CD4-positive, alpha-beta memory T cell (primary cell): ENCODE measurements at regions of chr1 and their contacts with region 1.

Region 1: DNA sequence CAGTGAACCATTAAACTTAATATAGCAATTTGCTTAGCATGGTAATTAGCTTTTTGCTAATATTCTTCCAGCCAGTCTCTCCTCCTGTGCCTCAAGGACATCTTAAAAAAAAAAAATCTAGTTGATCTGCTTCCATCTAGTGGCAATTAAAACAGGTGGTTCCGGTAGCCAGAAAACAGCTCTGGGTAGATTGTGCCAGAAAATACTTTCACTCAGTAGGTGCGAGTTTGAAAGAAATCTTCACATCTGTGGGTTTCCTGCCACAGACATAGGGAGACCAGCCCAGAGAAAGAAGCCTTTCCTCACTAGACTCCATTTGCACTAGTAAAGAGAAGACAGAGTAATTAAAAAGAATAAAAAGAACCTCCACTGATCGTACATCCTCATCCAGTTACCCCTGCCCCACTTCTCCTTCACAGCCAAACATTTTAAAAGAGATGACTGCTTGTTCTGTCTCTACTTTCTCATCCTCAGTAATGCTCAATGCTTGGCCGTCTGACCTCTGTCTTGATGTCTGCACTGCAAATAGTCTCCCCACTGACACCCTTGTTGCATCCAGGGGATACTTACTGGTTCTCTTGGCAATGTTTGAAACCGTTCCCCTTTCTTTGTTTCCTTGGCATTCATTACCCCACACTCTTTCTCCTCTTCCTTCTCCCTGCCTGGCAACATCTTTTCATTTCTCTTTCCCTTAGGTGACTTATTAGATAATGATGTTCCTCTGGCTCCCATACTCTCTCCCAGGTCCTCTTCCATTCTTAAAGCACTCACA is 16.9 kb downstream of the SELL start:
- DNase-seq: peak; percentile 76 to 84 (median 79)
- H3K4me3 ChIP-seq: no peak overlapping the region
- H3K4me3 Mint-ChIP-seq: peak overlapping the region; percentile 55 to 83 (median 68)
- H3K27ac ChIP-seq: peak overlapping the region; percentile 43
- H3K27ac Mint-ChIP-seq: peak overlapping the region in 6 of 7 donors; percentile 90 to 95 (median 92)
- H3K4me1 ChIP-seq: peaks cover 99% of the 10 kb centered on the region
- H3K4me1 Mint-ChIP-seq: peaks cover 81 to 97% (median 88%) of the 10 kb centered on the region in 4 donors
- H3K27me3 ChIP-seq: no peaks in the 10 kb centered on the region
- H3K27me3 Mint-ChIP-seq: no peaks in the 10 kb centered on the region

Region 2: GRCh38 chr1:169060906-169061639 is 633.4 kb before region 1 on chr1:
- CTCF ChIA-PET with region 1: no interaction called
- POLR2A ChIA-PET with region 1: no interaction called
- intact Hi-C with region 1: no loop called
- DNase-seq: no peak
- H3K4me3 ChIP-seq: no peak overlapping the region
- H3K4me3 Mint-ChIP-seq: no peak overlapping the region
- H3K27ac ChIP-seq: no peak overlapping the region
- H3K27ac Mint-ChIP-seq: no peak overlapping the region
- H3K4me1 ChIP-seq: no peaks in the 10 kb centered on the region
- H3K4me1 Mint-ChIP-seq: peaks cover 0 to 4% (median 1%) of the 10 kb centered on the region in 4 donors
- H3K27me3 ChIP-seq: no peaks in the 10 kb centered on the region
- H3K27me3 Mint-ChIP-seq: peaks cover 0 to 2% of the 10 kb centered on the region in 2 donors

Region 3: GRCh38 chr1:169367486-169368405 is 326.7 kb before region 1 on chr1 and contains the starts of genes BLZF1 and NME7:
- CTCF ChIA-PET with region 1: no interaction called
- POLR2A ChIA-PET with region 1: no interaction called
- intact Hi-C with region 1: loop called (anchors 10 kb)
- DNase-seq: peak; percentile 95 to 99 (median 98)
- H3K4me3 ChIP-seq: peak within 1 kb of the TSS; percentile 96
- H3K4me3 Mint-ChIP-seq: peak within 1 kb of the TSS in 3 of 8 donors; percentile 16 to 51 (median 24)
- H3K27ac ChIP-seq: peak within 1 kb of the TSS; percentile 71
- H3K27ac Mint-ChIP-seq: peak within 1 kb of the TSS in 3 of 7 donors; percentile 25 to 54 (median 33)
- H3K4me1 ChIP-seq: peaks cover 44% of the 10 kb centered on the region
- H3K4me1 Mint-ChIP-seq: peaks cover 22 to 31% (median 23%) of the 10 kb centered on the region in 4 donors
- H3K27me3 ChIP-seq: no peaks in the 10 kb centered on the region
- H3K27me3 Mint-ChIP-seq: no peaks in the 10 kb centered on the region
- total RNA-seq, gene BLZF1: 20.0 to 23.8 TPM
- total RNA-seq, gene NME7: 12.0 to 14.3 TPM

Region 4: DNA sequence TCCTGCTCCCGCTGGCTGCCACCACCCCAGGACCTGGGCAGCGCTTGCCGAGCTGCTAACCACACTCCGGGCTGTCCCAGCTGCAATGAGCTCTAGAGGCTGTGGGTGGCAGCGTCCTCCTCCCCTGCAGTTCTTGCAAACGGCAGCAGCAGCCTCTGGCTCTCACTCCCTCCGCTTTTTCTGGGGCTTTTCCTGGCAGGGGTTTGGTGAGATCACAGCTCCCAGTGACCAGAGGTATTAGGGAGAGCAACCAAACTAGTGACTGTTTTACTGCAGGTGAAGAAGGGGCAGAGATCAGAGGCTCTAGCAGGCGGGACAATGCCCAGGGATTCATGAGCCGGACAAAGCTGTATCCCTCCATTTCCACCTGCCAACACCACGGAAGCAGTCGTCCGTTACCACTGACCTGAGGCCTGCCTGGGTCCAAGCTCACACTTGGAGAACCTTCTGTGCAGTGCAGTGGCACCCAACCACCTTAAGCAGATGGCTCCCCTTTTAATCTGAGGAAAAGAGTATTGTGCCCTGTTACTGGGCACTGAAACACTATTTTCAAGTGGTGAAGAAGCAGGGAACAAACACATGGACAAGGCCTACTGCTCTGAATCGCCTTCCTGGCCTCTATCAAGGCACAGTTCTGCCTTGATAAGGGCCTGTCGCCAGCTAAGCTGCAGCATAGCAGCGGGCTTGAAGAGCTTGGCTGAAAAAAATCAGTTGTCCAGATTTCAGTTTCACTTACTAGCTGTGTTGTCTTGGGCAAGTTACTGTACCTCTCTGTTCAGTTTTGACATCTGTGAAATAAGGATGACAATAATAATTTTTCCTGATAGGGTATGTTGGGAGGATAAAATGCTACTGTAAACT is 107.9 kb before region 1 on chr1 and contains the start of gene F5:
- CTCF ChIA-PET with region 1: interaction called, 34 read pairs
- POLR2A ChIA-PET with region 1: interaction called, 30 read pairs
- intact Hi-C with region 1: loop called (anchors 1 kb)
- DNase-seq: peak; percentile 67 to 78 (median 72)
- H3K4me3 ChIP-seq: peak within 1 kb of the TSS; percentile 47 to 62
- H3K4me3 Mint-ChIP-seq: peak within 1 kb of the TSS; percentile 86 to 94 (median 89)
- H3K27ac ChIP-seq: peak within 1 kb of the TSS; percentile 36
- H3K27ac Mint-ChIP-seq: peak within 1 kb of the TSS; percentile 58 to 95 (median 74)
- H3K4me1 ChIP-seq: peaks cover 52% of the 10 kb centered on the region
- H3K4me1 Mint-ChIP-seq: peaks cover 15 to 51% (median 37%) of the 10 kb centered on the region in 4 donors
- H3K27me3 ChIP-seq: no peaks in the 10 kb centered on the region
- H3K27me3 Mint-ChIP-seq: peaks cover 2 to 11% of the 10 kb centered on the region in 2 donors
- total RNA-seq, gene F5: 4.9 to 6.1 TPM

Region 5: GRCh38 chr1:169624912-169625311 is 69.6 kb before region 1 on chr1:
- CTCF ChIA-PET with region 1: no interaction called
- POLR2A ChIA-PET with region 1: interaction called, 10 read pairs
- intact Hi-C with region 1: no loop called
- DNase-seq: no peak
- H3K4me3 ChIP-seq: no peak overlapping the region
- H3K4me3 Mint-ChIP-seq: peak overlapping the region in 1 of 8 donors; percentile 6
- H3K27ac ChIP-seq: no peak overlapping the region
- H3K27ac Mint-ChIP-seq: peak overlapping the region in 2 of 7 donors; percentile 11 to 38
- H3K4me1 ChIP-seq: peaks cover 40% of the 10 kb centered on the region
- H3K4me1 Mint-ChIP-seq: peaks cover 33 to 58% (median 51%) of the 10 kb centered on the region in 4 donors
- H3K27me3 ChIP-seq: no peaks in the 10 kb centered on the region
- H3K27me3 Mint-ChIP-seq: no peaks in the 10 kb centered on the region

Region 6: DNA sequence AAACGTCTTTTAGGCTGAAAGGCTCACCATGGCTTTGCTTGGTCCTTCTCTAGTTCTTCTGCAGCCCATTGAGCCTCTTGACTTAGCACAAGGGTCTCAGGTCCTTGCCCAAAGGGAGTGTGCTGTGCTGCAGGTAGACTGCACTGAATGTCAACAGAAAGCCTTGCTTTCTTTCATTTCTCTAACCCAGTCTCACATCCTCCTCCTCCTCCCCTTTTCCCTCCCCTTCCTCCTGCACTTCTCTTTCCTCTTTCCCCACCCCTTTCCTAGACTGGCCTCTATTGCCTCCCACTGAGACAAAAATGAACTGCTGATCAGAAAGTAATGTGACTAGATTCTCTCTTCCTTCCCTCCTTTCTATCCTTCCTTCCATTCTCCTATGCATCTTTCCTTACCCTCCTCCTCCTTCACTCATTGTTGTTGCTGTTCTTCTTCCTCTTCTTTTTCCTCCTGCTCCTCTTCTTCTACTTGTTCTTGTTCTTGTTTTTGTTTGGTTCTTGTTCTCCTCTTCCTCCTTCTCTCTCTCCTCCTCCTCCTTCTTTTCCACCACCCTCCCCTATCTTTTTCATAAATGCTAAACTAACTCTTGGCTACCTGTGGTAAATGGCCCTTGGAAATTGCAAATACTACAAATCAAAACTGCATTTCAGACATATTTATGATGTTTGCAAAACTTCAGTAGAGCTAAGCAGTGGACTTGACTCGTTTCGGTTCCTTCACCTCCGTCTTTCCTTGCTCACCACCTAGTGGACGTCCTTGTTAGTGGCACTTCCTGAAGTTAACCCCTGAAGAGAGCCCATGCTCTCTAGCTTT is 17.2 kb after region 1 on chr1 and contains the start of gene SELL:
- CTCF ChIA-PET with region 1: interaction called, 85 read pairs
- POLR2A ChIA-PET with region 1: interaction called, 248 read pairs
- intact Hi-C with region 1: loop called (anchors 1 kb)
- DNase-seq: peak; percentile 75 to 83 (median 78)
- H3K4me3 ChIP-seq: peak within 1 kb of the TSS; percentile 55 to 61
- H3K4me3 Mint-ChIP-seq: peak within 1 kb of the TSS; percentile 87 to 96 (median 92)
- H3K27ac ChIP-seq: peak within 1 kb of the TSS; percentile 48
- H3K27ac Mint-ChIP-seq: peak within 1 kb of the TSS; percentile 70 to 95 (median 86)
- H3K4me1 ChIP-seq: peaks cover 18% of the 10 kb centered on the region
- H3K4me1 Mint-ChIP-seq: peaks cover 16 to 28% (median 24%) of the 10 kb centered on the region in 4 donors
- H3K27me3 ChIP-seq: no peaks in the 10 kb centered on the region
- H3K27me3 Mint-ChIP-seq: peaks cover 3 to 4% of the 10 kb centered on the region in 2 donors
- total RNA-seq, gene SELL: 378 to 396 TPM

Region 7: GRCh38 chr1:170114906-170115305 is 420.4 kb after region 1 on chr1:
- CTCF ChIA-PET with region 1: no interaction called
- POLR2A ChIA-PET with region 1: no interaction called
- intact Hi-C with region 1: no loop called
- DNase-seq: no peak
- H3K4me3 ChIP-seq: no peak overlapping the region
- H3K4me3 Mint-ChIP-seq: no peak overlapping the region
- H3K27ac ChIP-seq: no peak overlapping the region
- H3K27ac Mint-ChIP-seq: no peak overlapping the region
- H3K4me1 ChIP-seq: no peaks in the 10 kb centered on the region
- H3K4me1 Mint-ChIP-seq: no peaks in the 10 kb centered on the region
- H3K27me3 ChIP-seq: no peaks in the 10 kb centered on the region
- H3K27me3 Mint-ChIP-seq: peaks cover 10 to 16% of the 10 kb centered on the region in 2 donors